Panc1 (cell line): ENCODE measurements at regions of chr3 and their contacts with region 1.

Region 1: DNA sequence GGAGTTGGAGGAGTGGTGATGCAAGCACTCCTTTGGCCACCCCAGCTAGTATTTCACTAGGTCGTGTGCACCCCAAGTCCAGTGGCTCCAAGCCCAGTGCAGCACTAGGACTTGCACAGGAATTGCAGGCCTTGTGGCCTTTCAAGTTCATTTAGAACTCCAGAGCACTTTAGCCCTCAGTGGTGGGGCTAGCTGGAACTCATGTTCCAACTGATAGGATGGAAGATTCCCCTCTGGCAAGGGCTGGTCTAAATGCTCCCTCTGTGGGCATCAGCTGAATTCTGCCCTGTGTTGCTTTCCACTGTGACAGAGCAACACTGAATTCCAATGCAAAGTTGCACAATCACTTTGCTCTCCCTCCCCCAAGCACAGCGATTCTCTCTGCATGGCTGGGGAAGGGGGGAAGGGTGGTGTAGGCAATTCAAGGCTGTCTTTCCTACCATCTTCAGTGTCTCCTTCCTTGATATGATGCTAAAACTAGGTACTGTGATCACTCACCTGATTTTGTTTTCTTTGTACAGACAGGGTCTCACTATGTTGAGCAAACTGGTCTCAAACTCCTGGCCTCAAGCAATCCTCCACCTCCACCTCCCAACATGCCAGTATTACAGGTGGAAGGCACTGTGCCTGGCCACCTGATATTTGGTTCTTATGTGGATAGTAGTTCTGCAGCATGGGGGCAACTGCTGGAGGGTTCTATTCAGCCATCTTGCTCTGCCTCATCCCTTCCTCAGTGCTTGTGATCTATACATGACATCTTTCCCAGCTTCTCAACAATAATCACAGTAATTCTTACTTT is 10.3 kb downstream of the USF3 start:
- DNase-seq: no peak
- ATAC-seq: no peak
- H3K4me3 ChIP-seq: no peak overlapping the region
- H3K27ac ChIP-seq: no peak overlapping the region
- H3K4me1 ChIP-seq: no peaks in the 10 kb centered on the region
- H3K27me3 ChIP-seq: no peaks in the 10 kb centered on the region
- CTCF ChIP-seq: no peak

Region 2: GRCh38 chr3:112948346-112948838 is 737.8 kb before region 1 on chr3:
- CTCF ChIA-PET with region 1: no interaction called
- POLR2A ChIA-PET with region 1: no interaction called
- in situ Hi-C with region 1: no loop called
- intact Hi-C with region 1: no loop called
- DNase-seq: no peak
- ATAC-seq: no peak
- H3K4me3 ChIP-seq: no peak overlapping the region
- H3K27ac ChIP-seq: no peak overlapping the region
- H3K4me1 ChIP-seq: no peaks in the 10 kb centered on the region
- H3K27me3 ChIP-seq: no peaks in the 10 kb centered on the region
- CTCF ChIP-seq: no peak

Region 3: GRCh38 chr3:113696658-113697499 is 10.7 kb after region 1 on chr3:
- CTCF ChIA-PET with region 1: interaction called, 12 read pairs
- POLR2A ChIA-PET with region 1: no interaction called
- in situ Hi-C with region 1: no loop called
- intact Hi-C with region 1: no loop called
- DNase-seq: peak; percentile 99
- ATAC-seq: peak; percentile 95
- H3K4me3 ChIP-seq: peak overlapping the region; percentile 78 to 97
- H3K27ac ChIP-seq: peak overlapping the region; percentile 98
- H3K4me1 ChIP-seq: peaks cover 17% of the 10 kb centered on the region
- H3K27me3 ChIP-seq: no peaks in the 10 kb centered on the region
- CTCF ChIP-seq: no peak